Naive thymus-derived CD4-positive, alpha-beta T cell (primary cell): ENCODE measurements at regions of chr21 and their contacts with region 1.

Region 1: GRCh38 chr21:46171996-46172862 is 12.0 kb downstream of the SPATC1L start:
- DNase-seq: no peak
- ATAC-seq: no peak
- H3K4me3 ChIP-seq: no peak overlapping the region
- H3K4me3 Mint-ChIP-seq: no peak overlapping the region
- H3K27ac ChIP-seq: no peak overlapping the region
- H3K27ac Mint-ChIP-seq: peak overlapping the region in 2 of 9 donors; percentile 43 to 62
- H3K4me1 ChIP-seq: no peaks in the 10 kb centered on the region
- H3K4me1 Mint-ChIP-seq: peaks cover 4 to 10% (median 8%) of the 10 kb centered on the region in 7 donors
- H3K27me3 ChIP-seq: no peaks in the 10 kb centered on the region
- H3K27me3 Mint-ChIP-seq: peaks cover 0 to 23% (median 0%) of the 10 kb centered on the region in 5 donors

Region 2: GRCh38 chr21:46038871-46039397 is 133.3 kb before region 1 on chr21:
- CTCF ChIA-PET with region 1: no interaction called
- POLR2A ChIA-PET with region 1: no interaction called
- intact Hi-C with region 1: no loop called
- DNase-seq: no peak
- ATAC-seq: no peak
- H3K4me3 ChIP-seq: no peak overlapping the region
- H3K4me3 Mint-ChIP-seq: no peak overlapping the region
- H3K27ac ChIP-seq: no peak overlapping the region
- H3K27ac Mint-ChIP-seq: no peak overlapping the region
- H3K4me1 ChIP-seq: no peaks in the 10 kb centered on the region
- H3K4me1 Mint-ChIP-seq: no peaks in the 10 kb centered on the region
- H3K27me3 ChIP-seq: no peaks in the 10 kb centered on the region
- H3K27me3 Mint-ChIP-seq: peaks cover 0 to 5% (median 4%) of the 10 kb centered on the region in 5 donors

Region 3: GRCh38 chr21:46122237-46122671 is 50.0 kb before region 1 on chr21:
- CTCF ChIA-PET with region 1: no interaction called
- POLR2A ChIA-PET with region 1: no interaction called
- intact Hi-C with region 1: no loop called
- DNase-seq: peak in 2 of 9 donors; percentile 1 to 9
- ATAC-seq: no peak
- H3K4me3 ChIP-seq: no peak overlapping the region
- H3K4me3 Mint-ChIP-seq: no peak overlapping the region
- H3K27ac ChIP-seq: no peak overlapping the region
- H3K27ac Mint-ChIP-seq: no peak overlapping the region
- H3K4me1 ChIP-seq: no peaks in the 10 kb centered on the region
- H3K4me1 Mint-ChIP-seq: peaks cover 0 to 2% (median 0%) of the 10 kb centered on the region in 7 donors
- H3K27me3 ChIP-seq: no peaks in the 10 kb centered on the region
- H3K27me3 Mint-ChIP-seq: no peaks in the 10 kb centered on the region

Region 4: DNA sequence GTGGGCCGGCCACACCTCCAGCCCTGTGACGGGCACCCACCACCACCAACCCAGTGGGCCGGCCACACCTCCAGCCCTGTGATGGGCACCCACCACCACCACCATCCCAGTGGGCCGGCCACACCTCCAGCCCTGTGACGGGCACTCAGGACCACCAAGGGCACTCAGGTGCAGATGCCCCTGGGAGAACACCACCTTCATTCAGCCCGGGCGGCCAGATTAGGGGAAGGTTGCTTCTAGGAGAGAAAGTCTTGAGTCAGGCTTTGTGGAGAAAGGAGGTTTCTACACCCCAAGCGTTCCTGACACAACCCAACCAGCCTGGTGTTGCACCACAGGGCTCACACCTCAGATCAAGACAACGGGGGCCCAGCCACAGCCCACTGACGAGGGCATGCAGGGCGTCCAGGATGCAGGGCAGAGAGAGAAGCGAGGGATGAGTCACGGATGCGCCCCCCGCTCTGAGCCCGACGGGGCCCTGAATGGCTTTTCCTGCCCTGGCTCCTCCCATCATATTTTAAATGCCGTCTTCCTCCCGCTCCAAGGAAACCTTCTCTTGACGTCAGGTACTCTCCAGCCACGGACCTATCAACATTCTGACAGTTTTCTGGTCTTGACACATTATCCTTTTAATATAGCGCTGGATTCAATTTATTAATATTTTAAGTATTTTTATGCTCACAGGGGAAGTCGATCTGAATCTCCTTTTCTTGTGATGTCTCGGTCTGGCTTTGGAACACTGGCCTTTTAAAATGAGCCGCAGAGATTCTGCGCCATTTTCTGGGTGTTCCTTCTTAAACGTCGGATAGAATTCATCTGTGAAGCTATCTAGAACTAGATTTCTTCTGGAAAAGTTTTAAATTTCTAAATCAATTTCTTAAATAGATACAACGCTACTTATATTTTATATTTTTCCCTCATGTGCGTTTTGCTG is 12.7 kb after region 1 on chr21:
- CTCF ChIA-PET with region 1: no interaction called
- POLR2A ChIA-PET with region 1: no interaction called
- intact Hi-C with region 1: loop called in 1 of 2 experiments (anchors 2 kb)
- DNase-seq: peak; percentile 48 to 79 (median 74)
- ATAC-seq: peak; percentile 79
- H3K4me3 ChIP-seq: peak overlapping the region; percentile 67
- H3K4me3 Mint-ChIP-seq: peak overlapping the region; percentile 80 to 92 (median 86)
- H3K27ac ChIP-seq: peak overlapping the region; percentile 68
- H3K27ac Mint-ChIP-seq: peak overlapping the region; percentile 75 to 91 (median 86)
- H3K4me1 ChIP-seq: peaks cover 0 to 5% of the 10 kb centered on the region in 2 donors
- H3K4me1 Mint-ChIP-seq: peaks cover 0 to 16% (median 10%) of the 10 kb centered on the region in 7 donors
- H3K27me3 ChIP-seq: no peaks in the 10 kb centered on the region
- H3K27me3 Mint-ChIP-seq: no peaks in the 10 kb centered on the region